Activated naive CD4-positive, alpha-beta T cell treated with anti-CD3 and anti-CD28 coated beads for 36 hours (primary cell): ENCODE measurements at regions of chr12 and their contacts with region 1.

Region 1: DNA sequence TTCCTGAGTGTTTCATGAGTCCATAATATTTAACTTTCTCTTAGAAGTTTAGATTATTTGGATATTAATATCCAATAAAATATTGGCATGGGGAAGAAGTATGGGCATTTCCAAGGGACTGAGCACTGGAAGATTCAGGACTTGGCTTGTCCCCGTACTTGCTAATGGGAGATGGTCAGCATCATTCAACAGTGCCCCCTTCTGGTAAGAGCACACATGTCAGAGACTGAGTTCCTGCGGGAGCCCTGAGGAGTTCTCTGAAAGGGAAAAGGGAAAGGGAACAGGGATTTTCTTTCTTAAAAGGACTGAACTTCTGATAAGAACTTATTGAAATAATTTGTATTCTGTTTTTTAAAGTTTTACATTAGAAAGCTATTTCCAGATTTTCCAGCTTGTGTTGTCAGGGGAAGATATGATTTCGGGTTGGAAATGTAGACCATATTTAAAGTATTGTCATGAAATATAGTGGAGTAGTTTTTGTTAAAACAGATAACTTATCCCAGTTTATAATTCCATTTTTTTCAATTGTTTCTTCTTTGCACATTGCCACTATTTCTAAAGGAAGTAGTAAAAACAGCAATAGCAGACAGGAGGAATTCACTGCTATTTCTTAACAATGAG is 59.8 kb upstream of the C12orf71 start:
- DNase-seq: peak; percentile 61
- H3K4me3 Mint-ChIP-seq: no peak overlapping the region
- H3K27ac Mint-ChIP-seq: no peak overlapping the region
- H3K4me1 Mint-ChIP-seq: peaks cover 10% of the 10 kb centered on the region
- H3K27me3 Mint-ChIP-seq: no peaks in the 10 kb centered on the region

Region 2: GRCh38 chr12:27048822-27049752 is 93.1 kb before region 1 on chr12:
- CTCF ChIA-PET with region 1: no interaction called
- intact Hi-C with region 1: no loop called
- DNase-seq: no peak
- H3K4me3 Mint-ChIP-seq: no peak overlapping the region
- H3K27ac Mint-ChIP-seq: no peak overlapping the region
- H3K4me1 Mint-ChIP-seq: no peaks in the 10 kb centered on the region
- H3K27me3 Mint-ChIP-seq: no peaks in the 10 kb centered on the region

Region 3: DNA sequence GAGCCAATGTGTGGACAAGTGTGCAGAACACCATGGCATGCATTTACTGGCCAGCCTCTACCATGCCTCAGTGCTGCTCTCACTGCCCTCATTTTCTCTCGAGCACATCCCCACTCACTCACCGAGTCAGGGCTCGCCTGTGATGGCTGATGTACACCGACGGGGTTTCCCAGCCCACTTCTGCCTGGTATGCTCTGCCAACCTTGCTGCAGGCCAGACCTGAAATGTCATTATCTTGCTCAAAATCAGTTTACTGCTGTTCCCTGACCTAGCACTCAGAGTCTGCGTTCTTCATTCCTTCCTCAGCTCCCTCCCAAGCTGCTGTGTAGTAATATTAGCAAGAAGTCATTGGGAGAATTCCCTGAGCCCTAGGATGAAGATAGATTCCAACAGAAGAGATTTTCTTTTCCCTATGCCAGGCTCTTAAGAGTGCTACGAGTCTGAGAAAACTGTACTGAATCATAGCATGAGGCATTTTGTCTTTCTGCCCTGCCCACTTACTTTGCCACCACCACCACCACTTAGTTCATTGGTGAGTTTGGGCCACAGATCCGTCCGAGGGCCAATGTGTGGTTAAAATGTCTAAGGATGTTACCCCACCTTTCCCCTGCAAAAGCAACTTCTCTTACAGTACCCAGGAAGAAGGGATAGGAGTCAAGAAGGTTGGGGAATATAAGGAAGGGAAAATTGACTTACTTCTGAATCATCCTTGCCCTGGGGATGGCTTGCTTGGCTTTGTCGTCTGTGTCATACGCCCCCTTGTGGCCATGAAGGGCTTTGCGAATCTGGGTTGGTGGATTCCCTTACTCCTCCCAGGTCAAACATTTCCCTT is 241.4 kb after region 1 on chr12:
- CTCF ChIA-PET with region 1: no interaction called
- intact Hi-C with region 1: loop called (anchors 5 kb)
- DNase-seq: peak; percentile 84
- H3K4me3 Mint-ChIP-seq: no peak overlapping the region
- H3K27ac Mint-ChIP-seq: no peak overlapping the region
- H3K4me1 Mint-ChIP-seq: no peaks in the 10 kb centered on the region
- H3K27me3 Mint-ChIP-seq: peaks cover 4% of the 10 kb centered on the region